MCF 10A (cell line): ENCODE measurements at regions of chr5 and their contacts with region 1.

Region 1: DNA sequence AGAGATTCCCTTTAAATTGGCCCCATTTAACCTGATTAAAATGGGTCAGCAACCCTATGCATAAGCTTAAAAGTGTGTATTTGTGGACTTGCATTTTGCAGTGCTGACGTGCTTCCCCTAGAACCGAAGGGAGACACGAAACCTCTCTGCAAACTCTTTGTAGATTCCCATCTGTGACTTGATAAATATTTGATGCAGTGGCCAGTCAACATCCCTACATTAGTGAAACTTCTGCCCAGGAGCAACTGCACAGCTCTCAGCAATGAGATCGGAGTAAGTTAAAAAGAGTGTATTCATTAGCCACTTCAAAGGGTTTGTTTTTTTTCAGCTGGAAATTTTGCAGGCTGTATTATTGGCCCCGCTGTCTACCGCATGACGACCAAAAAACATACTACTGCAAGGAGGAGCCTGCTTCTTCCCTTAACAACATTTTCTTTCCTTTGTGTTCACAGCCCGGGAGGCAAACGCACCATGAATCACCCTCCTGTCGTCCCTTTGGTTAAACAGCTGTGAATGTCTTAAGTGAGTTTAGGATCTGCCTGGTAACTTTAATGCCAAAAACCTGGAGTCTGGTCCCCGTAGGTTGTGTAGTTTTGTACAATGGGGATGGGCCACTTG is 38.0 kb upstream of the TCERG1 start:
- DNase-seq: peak; percentile 67
- H3K4me3 Mint-ChIP-seq: peak overlapping the region; percentile 39
- H3K27ac Mint-ChIP-seq: no peak overlapping the region
- H3K4me1 Mint-ChIP-seq: peaks cover 13% of the 10 kb centered on the region
- H3K27me3 Mint-ChIP-seq: no peaks in the 10 kb centered on the region
- CTCF ChIP-seq: no peak

Region 2: GRCh38 chr5:145981589-145982491 is 427.3 kb before region 1 on chr5:
- CTCF ChIA-PET with region 1: no interaction called
- POLR2A ChIA-PET with region 1: no interaction called
- intact Hi-C with region 1: no loop called
- DNase-seq: no peak
- H3K4me3 Mint-ChIP-seq: no peak overlapping the region
- H3K27ac Mint-ChIP-seq: peak overlapping the region; percentile 26
- H3K4me1 Mint-ChIP-seq: peaks cover 10% of the 10 kb centered on the region
- H3K27me3 Mint-ChIP-seq: no peaks in the 10 kb centered on the region
- CTCF ChIP-seq: no peak

Region 3: DNA sequence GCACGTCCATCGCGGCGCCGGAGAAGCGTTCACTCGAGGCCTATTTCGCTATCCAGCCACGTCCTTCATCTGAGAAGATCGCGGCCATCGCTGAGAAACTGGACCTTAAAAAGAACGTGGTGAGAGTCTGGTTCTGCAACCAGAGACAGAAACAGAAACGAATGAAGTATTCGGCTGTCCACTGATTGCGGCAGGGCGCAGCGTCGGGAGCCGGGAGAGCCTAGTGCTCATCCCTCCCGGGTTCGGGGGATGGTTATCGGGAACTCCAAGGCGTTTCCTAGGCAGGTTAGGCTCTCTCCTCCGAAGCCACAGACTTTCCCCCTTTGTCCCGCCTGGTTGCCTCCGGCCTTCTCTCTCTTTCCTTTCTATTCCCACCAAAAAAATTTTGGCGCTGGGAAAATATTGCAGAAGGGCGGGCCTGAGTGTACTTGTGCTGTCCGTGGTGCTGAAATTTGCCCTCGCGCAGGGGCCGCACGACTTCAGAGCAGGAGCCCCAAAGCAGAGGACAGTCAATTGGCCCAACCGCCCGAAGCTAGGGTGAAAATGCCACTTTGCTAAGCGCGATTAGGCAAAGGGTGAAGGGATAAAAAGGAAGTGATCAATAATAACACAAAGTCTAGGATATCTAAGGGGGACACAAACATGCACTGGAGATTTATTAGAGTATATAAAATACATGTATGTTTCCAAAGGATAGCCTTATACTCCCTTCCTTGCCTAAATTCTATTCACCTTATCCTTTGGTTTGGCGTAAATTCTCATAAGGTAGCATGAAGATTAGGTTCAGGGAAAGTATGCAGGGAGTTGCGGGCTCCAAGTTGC is 68.7 kb before region 1 on chr5:
- CTCF ChIA-PET with region 1: no interaction called
- POLR2A ChIA-PET with region 1: no interaction called
- intact Hi-C with region 1: no loop called
- DNase-seq: peak; percentile 59
- H3K4me3 Mint-ChIP-seq: no peak overlapping the region
- H3K27ac Mint-ChIP-seq: no peak overlapping the region
- H3K4me1 Mint-ChIP-seq: no peaks in the 10 kb centered on the region
- H3K27me3 Mint-ChIP-seq: peaks cover 100% of the 10 kb centered on the region
- CTCF ChIP-seq: no peak

Region 4: GRCh38 chr5:146419696-146420095 is 10.5 kb after region 1 on chr5:
- CTCF ChIA-PET with region 1: interaction called, 4 read pairs
- POLR2A ChIA-PET with region 1: interaction called, 10 read pairs
- intact Hi-C with region 1: no loop called
- DNase-seq: no peak
- H3K4me3 Mint-ChIP-seq: no peak overlapping the region
- H3K27ac Mint-ChIP-seq: no peak overlapping the region
- H3K4me1 Mint-ChIP-seq: no peaks in the 10 kb centered on the region
- H3K27me3 Mint-ChIP-seq: no peaks in the 10 kb centered on the region
- CTCF ChIP-seq: no peak

Region 5: GRCh38 chr5:146647656-146648199 is 238.6 kb after region 1 on chr5:
- CTCF ChIA-PET with region 1: no interaction called
- POLR2A ChIA-PET with region 1: no interaction called
- intact Hi-C with region 1: no loop called
- DNase-seq: peak; percentile 13
- H3K4me3 Mint-ChIP-seq: no peak overlapping the region
- H3K27ac Mint-ChIP-seq: no peak overlapping the region
- H3K4me1 Mint-ChIP-seq: no peaks in the 10 kb centered on the region
- H3K27me3 Mint-ChIP-seq: no peaks in the 10 kb centered on the region
- CTCF ChIP-seq: no peak